Mammary epithelial cell (primary cell): ENCODE measurements at regions of chr20 and their contacts with region 1.

Region 1: GRCh38 chr20:45088247-45088646 is 12.7 kb downstream of the KCNS1 start:
- DNase-seq: peak; percentile 96
- H3K4me3 ChIP-seq: no peak overlapping the region
- H3K27ac ChIP-seq: peak overlapping the region; percentile 64
- H3K4me1 ChIP-seq: peaks cover 22% of the 10 kb centered on the region
- H3K27me3 ChIP-seq: no peaks in the 10 kb centered on the region
- CTCF ChIP-seq: no peak

Region 2: GRCh38 chr20:45049904-45050471 is 38.3 kb before region 1 on chr20:
- CTCF ChIA-PET with region 1: no interaction called
- dilution Hi-C with region 1: no loop called
- in situ Hi-C with region 1: loop called in 1 of 2 experiments (anchors 5 kb)
- intact Hi-C with region 1: no loop called
- DNase-seq: no peak
- H3K4me3 ChIP-seq: no peak overlapping the region
- H3K27ac ChIP-seq: no peak overlapping the region
- H3K4me1 ChIP-seq: peaks cover 11% of the 10 kb centered on the region
- H3K27me3 ChIP-seq: no peaks in the 10 kb centered on the region
- CTCF ChIP-seq: no peak

Region 3: GRCh38 chr20:45061244-45061643 is 27.0 kb before region 1 on chr20:
- CTCF ChIA-PET with region 1: no interaction called
- dilution Hi-C with region 1: no loop called
- in situ Hi-C with region 1: no loop called
- intact Hi-C with region 1: loop called (anchors 2 kb)
- DNase-seq: peak; percentile 94
- H3K4me3 ChIP-seq: no peak overlapping the region
- H3K27ac ChIP-seq: peak overlapping the region; percentile 87
- H3K4me1 ChIP-seq: peaks cover 38% of the 10 kb centered on the region
- H3K27me3 ChIP-seq: no peaks in the 10 kb centered on the region
- CTCF ChIP-seq: no peak